GM10248 (cell line): ENCODE measurements at regions of chr12 and their contacts with region 1.

Region 1: DNA sequence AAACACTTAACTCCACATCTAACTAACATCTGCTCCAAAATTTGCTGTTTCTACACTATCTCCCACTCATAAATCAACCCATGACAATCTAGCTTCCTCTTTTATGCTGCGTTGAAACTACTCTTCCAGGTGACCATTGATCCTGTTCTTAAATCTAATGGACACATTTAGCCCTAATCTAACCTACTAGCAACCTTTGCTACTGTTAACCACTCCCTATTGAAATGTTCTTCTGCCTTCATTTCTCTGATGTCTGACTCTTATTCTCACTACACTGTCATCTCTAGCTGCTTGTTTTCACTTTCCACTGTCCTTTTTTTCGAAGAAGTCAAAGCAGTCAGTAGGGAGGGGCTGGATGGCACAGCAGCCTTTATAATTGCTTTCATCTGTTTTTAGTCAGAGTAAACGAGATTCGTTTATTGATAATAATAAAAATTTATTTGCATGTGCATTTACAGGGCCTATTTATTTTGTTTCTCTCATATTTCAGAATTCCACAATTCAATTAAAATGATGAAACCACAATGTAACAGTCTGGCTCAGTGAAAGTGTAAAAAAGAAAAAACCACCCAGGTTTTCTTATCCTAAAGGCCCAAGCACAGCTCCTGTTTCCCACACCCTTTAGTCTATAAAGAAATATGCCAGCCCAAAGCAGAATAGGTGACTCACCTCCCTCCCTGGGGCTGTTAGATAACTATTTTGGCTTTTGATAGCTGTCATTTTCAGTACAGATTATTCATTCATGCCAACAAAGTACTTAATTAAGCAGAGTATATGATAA is 44.9 kb downstream of the ATP2B1 start:
- DNase-seq: peak; percentile 24
- CTCF ChIP-seq: no peak

Region 2: DNA sequence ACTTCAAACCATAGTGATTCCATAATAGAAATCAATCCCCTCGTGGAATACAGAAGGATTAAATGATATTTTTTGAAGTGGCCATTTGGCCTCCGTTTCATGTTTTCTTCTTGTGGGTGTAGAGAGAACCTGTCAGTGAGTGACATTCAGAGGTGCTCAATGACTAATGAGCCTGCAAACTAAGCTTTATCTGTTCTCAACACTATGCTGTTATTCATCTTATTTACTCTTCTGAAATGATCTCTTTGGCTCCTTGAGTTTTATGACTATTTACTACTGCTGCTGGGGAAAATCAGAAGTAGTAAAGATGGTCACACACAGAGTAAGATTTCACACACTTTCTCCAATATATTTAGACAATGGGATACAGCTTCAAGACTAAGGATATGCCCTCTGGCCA is 14.5 kb after region 1 on chr12:
- CTCF ChIA-PET with region 1: interaction called, 14 read pairs
- POLR2A ChIA-PET with region 1: no interaction called
- DNase-seq: no peak
- CTCF ChIP-seq: no peak